ENCODE measurements at regions of chr21 and their contacts with region 1.

Region 1: DNA sequence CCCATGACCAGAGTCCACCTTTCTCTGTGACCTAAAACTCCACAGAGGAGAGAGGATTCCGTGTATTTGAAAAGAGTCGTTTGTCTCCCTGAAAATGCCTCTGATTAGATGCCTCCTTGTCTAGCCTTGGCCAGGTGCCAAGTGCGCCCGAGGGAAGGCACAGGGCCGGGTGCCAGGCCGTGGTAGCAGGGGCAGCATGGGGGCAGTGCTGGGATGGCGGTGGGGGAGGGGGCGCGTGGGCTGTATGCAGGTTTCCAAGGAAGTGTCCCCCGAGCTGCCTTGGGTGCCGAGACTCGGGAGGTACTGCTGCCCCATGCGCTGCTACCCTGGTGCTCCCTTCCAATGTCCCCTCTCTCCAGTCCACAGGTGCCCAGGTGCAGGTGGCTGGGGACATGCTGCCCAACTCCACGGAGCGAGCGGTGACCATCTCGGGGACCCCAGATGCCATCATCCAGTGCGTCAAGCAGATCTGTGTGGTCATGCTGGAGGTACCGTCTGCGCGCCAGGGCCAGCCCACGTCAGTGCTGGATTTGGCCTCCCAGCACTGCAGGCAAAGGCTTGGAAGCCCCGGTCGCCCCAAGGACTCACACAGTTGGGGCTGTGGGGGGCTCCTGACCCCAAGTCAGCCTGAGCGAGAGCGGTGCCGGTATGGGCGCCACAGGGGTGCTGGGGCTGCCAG is 70.9 kb upstream of the COL6A1 start:
- DNase-seq: peak in 2 of 3 donors; percentile 61 to 76
- ATAC-seq: no peak
- H3K4me3 ChIP-seq: no peak overlapping the region
- H3K27ac ChIP-seq: no peak overlapping the region
- H3K4me1 ChIP-seq: no peaks in the 10 kb centered on the region
- H3K27me3 ChIP-seq: no peaks in the 10 kb centered on the region

Region 2: DNA sequence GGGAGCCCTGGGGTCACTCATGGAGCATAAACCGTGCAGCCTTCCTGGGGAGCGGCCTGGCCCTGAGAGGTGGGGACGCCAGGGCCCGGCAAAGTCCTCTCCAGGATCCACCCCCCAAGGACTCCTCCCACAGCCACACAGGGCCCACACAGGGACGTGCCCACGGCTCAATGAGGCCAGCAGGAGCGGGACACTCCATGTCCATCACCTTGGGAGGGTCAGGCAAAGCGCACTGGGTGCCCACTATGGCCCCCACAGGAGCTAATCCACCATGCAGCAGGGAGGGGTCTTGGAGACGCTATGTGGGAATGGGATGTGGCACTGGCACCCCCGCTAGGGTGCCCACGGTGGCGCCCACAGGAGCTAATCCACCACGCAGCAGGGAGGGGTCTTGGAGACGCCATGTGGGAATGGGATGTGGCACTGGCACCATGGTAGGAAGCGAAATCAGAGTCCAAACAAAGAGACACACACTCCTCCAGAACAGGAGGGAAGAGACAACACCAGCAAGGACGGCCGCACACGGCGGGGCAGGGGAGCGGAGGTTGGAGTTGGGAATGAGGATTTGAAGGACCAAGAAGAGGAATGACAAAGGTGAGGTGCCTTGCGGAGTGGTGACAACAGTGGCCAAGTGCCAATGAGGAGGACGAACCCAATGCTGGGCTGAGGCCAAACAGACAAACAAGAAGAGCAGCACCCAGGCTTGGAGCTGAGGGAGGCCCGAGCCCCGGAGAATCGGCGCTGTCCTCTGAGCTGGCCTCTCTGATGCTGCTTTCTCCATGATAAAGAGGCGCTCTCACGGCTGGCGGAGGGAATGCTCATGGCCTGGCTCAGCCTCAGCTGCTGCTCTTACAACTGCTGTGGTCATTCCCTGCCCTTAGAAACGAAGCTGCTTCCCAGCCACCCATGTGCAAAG is 350.3 kb before region 1 on chr21:
- intact Hi-C with region 1: loop called in 1 of 4 experiments (anchors 10 kb)
- DNase-seq: peak in 2 of 3 donors; percentile 26 to 50
- ATAC-seq: no peak
- H3K4me3 ChIP-seq: no peak overlapping the region
- H3K27ac ChIP-seq: no peak overlapping the region
- H3K4me1 ChIP-seq: no peaks in the 10 kb centered on the region
- H3K27me3 ChIP-seq: no peaks in the 10 kb centered on the region